ENCODE measurements at regions of chr15 and their contacts with region 1.

Region 1: GRCh38 chr15:33908406-33908805 is 59.9 kb upstream of the CHRM5 start:
- DNase-seq: no peak
- H3K4me3 ChIP-seq: no peak overlapping the region
- H3K27ac ChIP-seq: no peak overlapping the region
- H3K4me1 ChIP-seq: no peaks in the 10 kb centered on the region
- H3K27me3 ChIP-seq: no peaks in the 10 kb centered on the region
- CTCF ChIP-seq: no peak
- POLR2A ChIP-seq: no peak

Region 2: GRCh38 chr15:33852557-33852956 is 55.8 kb before region 1 on chr15:
- intact Hi-C with region 1: loop called (anchors 10 kb)
- DNase-seq: no peak
- H3K4me3 ChIP-seq: no peak overlapping the region
- H3K27ac ChIP-seq: no peak overlapping the region
- H3K4me1 ChIP-seq: no peaks in the 10 kb centered on the region
- H3K27me3 ChIP-seq: no peaks in the 10 kb centered on the region
- CTCF ChIP-seq: no peak
- POLR2A ChIP-seq: no peak

Region 3: GRCh38 chr15:33955945-33956344 is 47.5 kb after region 1 on chr15:
- intact Hi-C with region 1: no loop called
- DNase-seq: no peak
- H3K4me3 ChIP-seq: no peak overlapping the region
- H3K27ac ChIP-seq: no peak overlapping the region
- H3K4me1 ChIP-seq: no peaks in the 10 kb centered on the region
- H3K27me3 ChIP-seq: no peaks in the 10 kb centered on the region
- CTCF ChIP-seq: no peak
- POLR2A ChIP-seq: no peak

Region 4: GRCh38 chr15:33975022-33975565 is 66.7 kb after region 1 on chr15:
- intact Hi-C with region 1: no loop called
- DNase-seq: no peak
- H3K4me3 ChIP-seq: no peak overlapping the region
- H3K27ac ChIP-seq: no peak overlapping the region
- H3K4me1 ChIP-seq: no peaks in the 10 kb centered on the region
- H3K27me3 ChIP-seq: no peaks in the 10 kb centered on the region
- CTCF ChIP-seq: no peak
- POLR2A ChIP-seq: no peak

Region 5: GRCh38 chr15:34011481-34011880 is 103.1 kb after region 1 on chr15:
- intact Hi-C with region 1: no loop called
- DNase-seq: no peak
- H3K4me3 ChIP-seq: no peak overlapping the region
- H3K27ac ChIP-seq: no peak overlapping the region
- H3K4me1 ChIP-seq: no peaks in the 10 kb centered on the region
- H3K27me3 ChIP-seq: no peaks in the 10 kb centered on the region
- CTCF ChIP-seq: no peak
- POLR2A ChIP-seq: no peak

Region 6: GRCh38 chr15:34154725-34155204 is 246.4 kb after region 1 on chr15:
- intact Hi-C with region 1: no loop called
- DNase-seq: no peak
- H3K4me3 ChIP-seq: no peak overlapping the region
- H3K27ac ChIP-seq: no peak overlapping the region
- H3K4me1 ChIP-seq: no peaks in the 10 kb centered on the region
- H3K27me3 ChIP-seq: no peaks in the 10 kb centered on the region
- CTCF ChIP-seq: no peak
- POLR2A ChIP-seq: no peak

Measured in vagina (tissue), 2 donors.